GM12878 (cell line): ENCODE measurements at regions of chr3 and their contacts with region 1.

Region 1: GRCh38 chr3:50227390-50228183 is 8.4 kb upstream of the GNAI2 start:
- DNase-seq: peak; percentile 61
- ATAC-seq: peak; percentile 91
- H3K4me3 ChIP-seq: peak overlapping the region; percentile 85
- H3K27ac ChIP-seq: peak overlapping the region; percentile 82
- H3K4me1 ChIP-seq: peaks cover 19% of the 10 kb centered on the region
- H3K27me3 ChIP-seq: no peaks in the 10 kb centered on the region
- CTCF ChIP-seq: peak; percentile 69 to 93 (median 82)
- EP300 ChIP-seq: no peak
- POLR2A ChIP-seq: peak; percentile 75
- RAD21 ChIP-seq: peak; percentile 88

Region 2: GRCh38 chr3:50121416-50122032 is 106.1 kb before region 1 on chr3:
- CTCF ChIA-PET with region 1: interaction called, 20 read pairs
- POLR2A ChIA-PET with region 1: interaction called, 7 read pairs
- RAD21 ChIA-PET with region 1: interaction called, 3 read pairs
- SMC1A ChIA-PET with region 1: no interaction called
- in situ Hi-C with region 1: no loop called
- intact Hi-C with region 1: loop called (anchors 1 kb)
- DNase-seq: peak; percentile 16
- ATAC-seq: peak; percentile 95
- H3K4me3 ChIP-seq: no peak overlapping the region
- H3K27ac ChIP-seq: no peak overlapping the region
- H3K4me1 ChIP-seq: no peaks in the 10 kb centered on the region
- H3K27me3 ChIP-seq: no peaks in the 10 kb centered on the region
- CTCF ChIP-seq: peak; percentile 83 to 85 (median 84)
- EP300 ChIP-seq: no peak
- POLR2A ChIP-seq: peak; percentile 72
- RAD21 ChIP-seq: peak; percentile 62

Region 3: DNA sequence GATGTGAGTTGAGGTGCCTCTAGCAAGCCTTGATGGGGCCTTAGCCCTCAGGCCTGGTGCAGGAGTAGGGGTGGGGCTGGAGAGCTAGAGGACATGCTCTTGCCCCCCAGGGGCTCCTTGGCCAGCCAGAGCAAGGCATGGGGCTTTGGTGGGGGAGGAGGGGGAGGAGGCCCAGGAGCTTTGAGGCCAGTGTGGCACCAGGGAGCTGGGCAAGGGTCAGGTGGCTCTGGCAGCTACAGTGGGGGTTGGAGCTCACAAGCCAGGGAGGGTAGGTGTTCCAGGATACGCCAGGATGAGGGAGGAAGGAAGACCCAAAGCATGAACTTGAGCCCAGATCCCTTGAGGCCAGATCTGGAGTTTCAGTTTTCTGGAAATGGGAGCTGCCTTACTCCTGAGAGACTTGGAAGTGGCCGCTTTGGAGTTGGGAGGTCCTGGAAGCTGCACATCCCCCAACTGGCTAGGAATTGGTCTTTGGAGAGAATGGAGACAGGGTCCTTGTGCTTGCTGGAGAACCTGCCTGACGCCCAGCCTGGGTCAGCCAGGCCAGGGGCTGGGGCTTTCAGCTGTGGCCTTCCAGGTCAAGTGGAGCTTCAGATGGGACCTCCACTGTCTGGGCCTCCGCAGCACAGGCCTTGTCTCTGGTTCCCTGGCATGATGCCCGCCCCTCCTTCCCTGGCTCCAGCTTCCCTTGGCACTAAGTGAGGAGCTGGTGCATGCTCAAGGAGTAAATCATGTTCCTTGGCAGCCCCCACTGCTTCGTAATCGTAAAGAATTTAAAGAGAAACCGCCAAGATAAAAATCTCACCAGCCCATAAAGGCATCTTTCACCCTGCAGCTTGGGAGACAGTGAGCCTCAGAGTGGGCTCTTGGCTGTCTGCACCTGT is 63.8 kb before region 1 on chr3:
- CTCF ChIA-PET with region 1: no interaction called
- POLR2A ChIA-PET with region 1: no interaction called
- RAD21 ChIA-PET with region 1: no interaction called
- SMC1A ChIA-PET with region 1: no interaction called
- in situ Hi-C with region 1: no loop called
- intact Hi-C with region 1: no loop called
- DNase-seq: no peak
- ATAC-seq: no peak
- H3K4me3 ChIP-seq: no peak overlapping the region
- H3K27ac ChIP-seq: no peak overlapping the region
- H3K4me1 ChIP-seq: no peaks in the 10 kb centered on the region
- H3K27me3 ChIP-seq: no peaks in the 10 kb centered on the region; a peak in 1 of 4 replicates
- CTCF ChIP-seq: no peak
- EP300 ChIP-seq: no peak
- POLR2A ChIP-seq: no peak
- RAD21 ChIP-seq: no peak

Region 4: GRCh38 chr3:50245831-50246516 is 18.4 kb after region 1 on chr3:
- CTCF ChIA-PET with region 1: interaction called, 149 read pairs
- POLR2A ChIA-PET with region 1: interaction called, 22 read pairs
- RAD21 ChIA-PET with region 1: interaction called, 73 read pairs
- SMC1A ChIA-PET with region 1: interaction called, 51 read pairs
- in situ Hi-C with region 1: no loop called
- intact Hi-C with region 1: loop called (anchors 1 kb)
- DNase-seq: no peak
- ATAC-seq: peak; percentile 90
- H3K4me3 ChIP-seq: peak overlapping the region; percentile 70
- H3K27ac ChIP-seq: peak overlapping the region; percentile 71
- H3K4me1 ChIP-seq: peaks cover 52% of the 10 kb centered on the region
- H3K27me3 ChIP-seq: no peaks in the 10 kb centered on the region
- CTCF ChIP-seq: peak; percentile 96 to 99 (median 98)
- EP300 ChIP-seq: peak in 1 of 2 experiments; percentile 42; a peak in 1 of 4 replicates
- POLR2A ChIP-seq: peak; percentile 57
- RAD21 ChIP-seq: peak; percentile 89

Region 5: GRCh38 chr3:50272911-50273693 is 45.5 kb after region 1 on chr3:
- CTCF ChIA-PET with region 1: interaction called, 24 read pairs
- POLR2A ChIA-PET with region 1: interaction called, 5 read pairs
- RAD21 ChIA-PET with region 1: interaction called, 23 read pairs
- SMC1A ChIA-PET with region 1: interaction called, 6 read pairs
- in situ Hi-C with region 1: no loop called
- intact Hi-C with region 1: loop called (anchors 1 kb)
- DNase-seq: peak; percentile 44
- ATAC-seq: peak; percentile 95
- H3K4me3 ChIP-seq: no peak overlapping the region
- H3K27ac ChIP-seq: no peak overlapping the region
- H3K4me1 ChIP-seq: peaks cover 6% of the 10 kb centered on the region
- H3K27me3 ChIP-seq: peaks cover 7 to 8% of the 10 kb centered on the region in 2 experiments; a peak in 3 of 4 replicates
- CTCF ChIP-seq: peak; percentile 98 to 99 (median 98); a peak in 5 of 6 replicates
- EP300 ChIP-seq: no peak
- POLR2A ChIP-seq: no peak
- RAD21 ChIP-seq: peak; percentile 93

Region 6: GRCh38 chr3:52062499-52062898 is 1834.9 kb after region 1 on chr3:
- CTCF ChIA-PET with region 1: no interaction called
- POLR2A ChIA-PET with region 1: interaction called, 10 read pairs
- RAD21 ChIA-PET with region 1: no interaction called
- SMC1A ChIA-PET with region 1: no interaction called
- in situ Hi-C with region 1: no loop called
- intact Hi-C with region 1: no loop called
- DNase-seq: peak; percentile 42
- ATAC-seq: peak; percentile 66
- H3K4me3 ChIP-seq: no peak overlapping the region
- H3K27ac ChIP-seq: peak overlapping the region; percentile 35
- H3K4me1 ChIP-seq: peaks cover 28% of the 10 kb centered on the region
- H3K27me3 ChIP-seq: no peaks in the 10 kb centered on the region
- CTCF ChIP-seq: no peak
- EP300 ChIP-seq: no peak
- POLR2A ChIP-seq: no peak
- RAD21 ChIP-seq: no peak